ENCODE measurements at regions of chr2 and their contacts with region 1.

Region 1: DNA sequence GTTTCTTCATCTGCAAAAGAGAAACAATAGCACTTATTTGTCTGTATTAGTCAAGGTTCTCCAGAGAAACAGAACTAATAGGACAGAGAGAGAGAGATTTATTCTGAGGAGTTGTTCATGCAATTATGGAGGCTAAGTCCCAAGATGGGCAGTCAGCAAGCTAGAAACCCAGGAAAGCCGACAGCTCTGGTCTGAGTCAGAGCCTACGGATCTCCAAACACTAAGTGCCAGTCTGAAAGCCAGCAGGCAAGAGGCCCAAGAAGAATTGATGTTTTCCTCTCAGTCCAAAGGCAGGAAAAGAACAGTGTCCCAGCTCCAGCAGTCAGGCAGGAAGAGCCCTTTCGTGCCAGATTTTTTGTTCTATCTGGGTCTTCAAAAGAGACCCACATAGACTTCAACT is 36.5 kb upstream of the SLC66A3 start:
- DNase-seq: peak; percentile 32

Region 2: DNA sequence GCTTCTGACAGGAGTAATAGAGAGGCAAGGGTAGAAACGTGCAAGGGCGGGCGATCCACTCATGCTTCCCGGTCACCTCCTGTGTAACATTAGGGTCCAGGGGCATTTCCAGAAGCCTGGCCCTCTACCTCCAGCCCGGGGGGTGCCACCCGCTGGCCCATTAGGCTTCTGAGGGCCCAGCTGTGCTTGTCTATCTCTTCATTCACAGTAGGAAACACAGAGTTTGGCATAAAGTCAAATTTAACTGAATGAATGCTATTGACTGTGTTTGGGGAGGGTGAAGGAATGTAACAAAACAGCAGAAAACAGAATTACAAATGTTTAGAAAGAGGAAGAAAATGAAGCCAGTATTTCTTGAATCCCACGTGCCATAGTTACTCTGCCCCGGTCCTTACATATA is 75.9 kb before region 1 on chr2:
- intact Hi-C with region 1: no loop called
- DNase-seq: no peak

Region 3: DNA sequence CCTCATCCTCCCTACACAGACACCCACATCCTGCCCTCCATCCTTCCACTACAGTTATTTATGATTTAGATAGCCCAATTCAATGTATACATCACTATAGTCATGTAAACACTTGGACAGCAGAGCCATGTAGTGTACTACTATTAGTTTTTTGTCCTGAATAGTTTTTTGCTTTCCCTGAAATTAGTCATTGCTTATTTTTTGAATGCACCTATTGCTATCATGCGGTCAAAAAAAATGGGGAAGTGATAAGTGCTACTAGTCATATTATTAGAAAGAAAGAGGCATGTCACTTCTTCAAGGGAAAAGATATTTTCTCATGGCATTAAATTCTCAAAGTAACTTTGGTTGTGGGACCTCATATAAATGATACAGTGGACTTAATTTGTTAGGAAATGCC is 408.2 kb after region 1 on chr2:
- intact Hi-C with region 1: loop called in 1 of 2 experiments (anchors 10 kb)
- DNase-seq: no peak